Activated T-helper 1 cell treated with anti-CD3 and anti-CD28 coated beads, Interleukin-12 subunit alpha, Interleukin-12 subunit beta, Interleukin-2, Interleukin-4 antibody, amounts not matched to agents 30 ng/mL and 10 ng/mL and 1 ng/mL, durations not matched to agents 14 hours and 24 hours and 36 hours (primary cell): ENCODE measurements at regions of chr14 and their contacts with region 1.

Region 1: DNA sequence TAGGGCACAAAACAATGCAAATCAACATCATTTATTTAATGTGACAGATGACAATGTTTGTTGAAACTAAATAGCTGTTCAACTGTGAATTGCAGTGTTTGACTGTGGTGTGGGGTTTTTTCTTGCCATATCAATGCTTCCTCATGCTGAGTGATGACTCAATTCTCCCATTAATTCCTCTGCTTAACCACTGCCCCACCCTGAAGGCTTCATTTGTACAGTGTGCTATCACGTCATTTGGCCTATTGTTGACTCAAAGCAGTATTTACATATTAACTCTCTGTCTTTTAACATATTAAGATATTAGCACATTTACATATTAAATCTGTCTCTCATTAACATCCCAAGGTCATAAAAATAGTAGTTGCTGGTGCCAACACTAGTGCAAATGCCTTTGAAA is 164.8 kb upstream of the NRXN3 start:
- DNase-seq: peak; percentile 40
- H3K4me3 Mint-ChIP-seq: no peak overlapping the region
- H3K27ac Mint-ChIP-seq: peak overlapping the region; percentile 49
- H3K4me1 Mint-ChIP-seq: peaks cover 28% of the 10 kb centered on the region
- H3K27me3 Mint-ChIP-seq: peaks cover 10% of the 10 kb centered on the region

Region 2: GRCh38 chr14:77965919-77966435 is 39.3 kb before region 1 on chr14:
- intact Hi-C with region 1: loop called (anchors 1 kb)
- DNase-seq: peak; percentile 48
- H3K4me3 Mint-ChIP-seq: peak overlapping the region; percentile 76
- H3K27ac Mint-ChIP-seq: peak overlapping the region; percentile 66
- H3K4me1 Mint-ChIP-seq: peaks cover 6% of the 10 kb centered on the region
- H3K27me3 Mint-ChIP-seq: no peaks in the 10 kb centered on the region